Sciatic nerve (tissue), 2 donors: ENCODE measurements at regions of chr2 and their contacts with region 1.

Region 1: DNA sequence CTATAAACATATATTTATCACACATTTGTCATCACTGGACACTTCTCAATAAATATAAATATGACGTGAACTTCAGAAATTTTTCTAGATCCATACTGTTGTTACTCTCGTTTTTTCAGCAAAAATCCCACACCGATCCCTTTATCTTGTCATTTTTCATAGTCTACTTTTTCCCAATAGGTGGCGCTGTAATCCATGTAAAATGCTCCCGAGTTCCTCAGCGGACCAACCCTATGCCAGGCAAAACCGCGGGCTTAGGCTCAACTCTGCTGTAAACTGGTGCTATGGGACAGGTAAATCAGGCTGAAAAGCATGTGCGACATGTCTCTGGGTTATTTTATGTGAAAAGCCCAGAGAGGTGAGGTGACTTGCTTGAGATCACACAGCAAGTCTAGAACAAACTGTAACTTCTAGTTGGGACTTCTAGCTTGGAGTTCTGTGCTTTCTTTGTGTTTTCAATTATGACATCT is 104.0 kb downstream of the COBLL1 start:
- DNase-seq: peak; percentile 65
- ATAC-seq: peak; percentile 80

Region 2: DNA sequence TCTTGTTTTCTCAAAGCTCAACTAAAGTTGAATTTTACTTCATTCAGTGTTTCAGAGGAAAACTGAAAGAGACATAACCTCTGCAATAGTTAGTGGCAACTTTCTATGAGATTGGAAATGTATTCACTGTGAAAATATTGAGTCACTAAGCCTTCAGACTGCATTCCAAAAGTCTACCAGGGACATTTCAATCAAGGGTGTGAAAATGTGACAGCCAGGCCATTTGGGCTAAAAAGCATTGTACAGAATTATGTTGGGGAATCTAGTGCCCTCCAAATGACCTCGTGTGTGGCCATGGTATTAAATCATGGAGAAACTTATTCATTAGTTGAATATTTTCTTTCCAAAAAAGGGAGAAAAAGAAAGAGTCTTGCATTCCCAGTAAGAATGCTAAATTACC is 368.3 kb before region 1 on chr2:
- intact Hi-C with region 1: no loop called
- DNase-seq: no peak
- ATAC-seq: no peak

Region 3: DNA sequence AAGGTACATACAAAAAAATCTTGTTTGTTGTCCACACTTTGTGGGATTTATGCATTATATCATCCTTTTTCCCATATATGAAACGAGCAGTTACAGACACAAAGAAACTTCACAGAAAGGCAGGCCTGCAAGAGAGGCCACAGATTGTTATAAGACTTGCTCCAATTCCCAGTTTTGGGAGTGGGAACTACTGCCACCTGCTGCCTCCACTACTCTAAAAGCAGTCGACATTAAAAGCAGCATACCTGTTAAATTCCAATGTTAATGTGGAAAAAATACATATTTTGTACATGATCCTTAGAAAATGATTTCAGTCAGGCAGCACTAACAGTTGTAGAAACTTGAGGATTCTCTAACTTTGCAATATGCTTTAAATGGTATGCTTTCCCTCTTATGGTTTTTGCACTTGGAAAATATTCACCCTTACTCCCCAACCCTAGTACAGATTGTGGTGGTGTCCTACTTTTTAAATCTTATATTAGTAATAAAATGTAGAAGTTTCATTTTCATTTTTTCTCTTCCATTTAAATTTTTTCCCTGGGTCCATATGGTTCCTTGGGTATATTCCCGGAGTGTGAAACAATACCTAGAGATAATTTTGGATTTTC is 179.8 kb after region 1 on chr2:
- intact Hi-C with region 1: loop called (anchors 5 kb)
- DNase-seq: peak; percentile 61
- ATAC-seq: peak; percentile 63